Activated naive CD4-positive, alpha-beta T cell treated with anti-CD3 and anti-CD28 coated beads for 36 hours (primary cell): ENCODE measurements at regions of chr15 and their contacts with region 1.

Region 1: GRCh38 chr15:92797168-92797951 is 102.8 kb upstream of the CHD2 start:
- DNase-seq: peak; percentile 53
- H3K4me3 Mint-ChIP-seq: no peak overlapping the region
- H3K27ac Mint-ChIP-seq: peak overlapping the region; percentile 19
- H3K4me1 Mint-ChIP-seq: peaks cover 11% of the 10 kb centered on the region
- H3K27me3 Mint-ChIP-seq: no peaks in the 10 kb centered on the region

Region 2: DNA sequence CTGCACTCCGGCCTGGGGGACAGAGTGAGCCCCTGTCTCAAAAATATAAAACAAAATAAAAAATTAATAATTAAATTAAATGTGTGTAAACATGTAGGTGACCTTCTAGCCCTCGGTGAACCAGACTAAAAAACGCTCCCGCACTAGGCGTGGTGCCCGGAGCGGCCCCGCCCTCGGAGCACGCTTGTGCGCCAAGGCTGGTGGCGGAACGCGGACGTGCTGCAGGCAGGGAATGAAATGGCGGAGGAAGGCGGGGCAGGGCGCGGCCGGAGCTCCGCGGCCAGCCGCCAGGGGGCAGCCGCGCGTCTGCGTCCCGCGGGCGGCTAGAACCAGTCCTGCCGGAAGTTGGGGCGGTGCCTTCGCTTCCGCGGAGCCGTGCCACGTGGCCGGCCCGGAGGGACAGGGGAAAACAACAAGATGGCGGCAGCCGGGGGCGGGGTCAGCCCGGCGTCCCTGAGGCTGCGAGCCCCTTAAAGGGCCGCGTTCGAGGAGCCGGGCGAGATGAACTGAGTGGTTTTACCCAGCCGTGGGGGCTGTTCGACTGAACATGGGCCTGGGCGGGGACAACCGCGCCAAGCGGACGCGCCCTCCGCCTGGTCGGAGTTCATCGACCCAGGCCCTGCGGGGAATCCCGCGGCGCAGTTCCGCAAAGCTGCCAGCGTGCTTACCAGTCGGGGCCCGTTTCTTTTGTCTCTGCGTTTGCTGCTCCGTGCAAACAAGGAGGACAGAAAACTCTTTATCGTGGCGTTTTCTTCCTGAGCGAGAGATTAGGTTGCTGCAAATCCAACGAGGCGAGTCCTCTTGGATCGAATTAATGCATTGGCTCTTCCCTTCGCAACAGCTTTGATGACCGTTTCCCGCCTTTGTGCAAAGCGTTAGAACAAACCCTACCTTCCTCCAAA is 11.9 kb after region 1 on chr15:
- CTCF ChIA-PET with region 1: interaction called, 12 read pairs
- intact Hi-C with region 1: no loop called
- DNase-seq: peak; percentile 99
- H3K4me3 Mint-ChIP-seq: peak overlapping the region; percentile 87
- H3K27ac Mint-ChIP-seq: peak overlapping the region; percentile 99
- H3K4me1 Mint-ChIP-seq: peaks cover 46% of the 10 kb centered on the region
- H3K27me3 Mint-ChIP-seq: no peaks in the 10 kb centered on the region

Region 3: DNA sequence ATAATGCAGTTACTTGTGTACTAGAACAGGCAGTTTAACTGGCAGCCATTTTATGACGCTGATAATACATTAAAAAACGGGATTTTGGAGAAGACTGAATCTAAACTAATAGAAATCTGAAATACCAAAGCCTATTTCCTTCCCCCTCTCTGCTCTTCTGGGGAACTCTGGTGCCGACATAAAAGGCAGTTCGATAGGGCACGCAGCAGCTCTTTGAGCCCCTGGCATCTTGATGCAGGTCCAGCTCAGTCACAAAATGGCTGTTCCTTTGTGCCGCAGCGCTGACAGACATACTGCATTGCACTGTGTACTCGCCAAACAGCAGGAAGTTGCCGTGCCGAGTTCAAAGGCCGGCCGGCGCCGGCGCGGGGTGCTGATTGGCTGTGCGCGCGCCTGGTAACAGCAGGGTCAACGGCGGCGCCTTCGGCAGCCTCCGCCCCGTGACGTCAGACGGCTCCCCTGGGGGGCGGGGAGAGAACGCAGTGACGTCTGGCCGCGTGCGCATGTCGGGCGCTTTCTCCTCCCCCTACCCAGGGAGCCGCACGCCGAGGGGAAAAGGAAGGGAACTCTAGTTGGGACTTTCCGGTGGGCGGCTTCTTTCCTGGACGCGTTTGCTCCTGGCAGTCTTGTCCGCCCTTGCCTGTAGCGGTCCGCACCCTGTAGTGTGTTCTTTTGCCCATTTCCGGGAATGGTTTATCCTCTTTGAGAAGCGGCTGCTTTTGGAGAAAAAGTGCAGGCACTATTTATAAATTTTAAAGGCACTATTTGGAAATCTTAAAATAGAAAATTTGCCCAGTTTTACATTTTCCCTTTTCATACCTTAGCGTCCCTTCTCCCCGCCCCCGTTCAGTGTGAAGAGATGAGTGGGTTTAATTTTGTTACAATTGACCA is 106.8 kb after region 1 on chr15:
- CTCF ChIA-PET with region 1: interaction called, 16 read pairs
- intact Hi-C with region 1: no loop called
- DNase-seq: peak; percentile 99
- H3K4me3 Mint-ChIP-seq: peak overlapping the region; percentile 92
- H3K27ac Mint-ChIP-seq: peak overlapping the region; percentile 100
- H3K4me1 Mint-ChIP-seq: peaks cover 50% of the 10 kb centered on the region
- H3K27me3 Mint-ChIP-seq: peaks cover 4% of the 10 kb centered on the region

Region 4: GRCh38 chr15:93030430-93031105 is 233.2 kb after region 1 on chr15:
- CTCF ChIA-PET with region 1: interaction called, 40 read pairs
- intact Hi-C with region 1: loop called (anchors 1 kb)
- DNase-seq: peak; percentile 78
- H3K4me3 Mint-ChIP-seq: no peak overlapping the region
- H3K27ac Mint-ChIP-seq: no peak overlapping the region
- H3K4me1 Mint-ChIP-seq: peaks cover 33% of the 10 kb centered on the region
- H3K27me3 Mint-ChIP-seq: no peaks in the 10 kb centered on the region

Region 5: DNA sequence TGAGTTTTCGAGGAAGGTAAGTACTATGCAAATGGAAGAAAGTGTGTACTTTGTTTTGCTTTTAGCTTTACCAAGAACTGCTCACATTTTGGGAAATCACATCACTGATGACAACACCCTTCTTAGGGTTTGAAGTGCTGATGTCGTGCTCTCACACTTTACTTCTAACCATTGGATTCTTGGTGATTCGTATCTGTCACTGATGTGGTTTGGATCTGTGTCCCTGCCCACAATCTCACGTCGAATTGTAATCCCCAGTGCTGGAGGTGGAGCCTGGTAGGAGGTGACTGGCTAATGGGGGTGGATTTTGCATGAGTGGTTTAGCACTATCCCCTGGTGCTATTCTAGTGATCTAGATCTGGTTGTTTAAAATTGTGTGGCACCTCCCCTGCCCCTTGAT is 367.0 kb after region 1 on chr15:
- CTCF ChIA-PET with region 1: no interaction called
- intact Hi-C with region 1: loop called (anchors 5 kb)
- DNase-seq: peak; percentile 59
- H3K4me3 Mint-ChIP-seq: no peak overlapping the region
- H3K27ac Mint-ChIP-seq: no peak overlapping the region
- H3K4me1 Mint-ChIP-seq: peaks cover 4% of the 10 kb centered on the region
- H3K27me3 Mint-ChIP-seq: peaks cover 7% of the 10 kb centered on the region